WTC11 (cell line): ENCODE measurements at regions of chr17 and their contacts with region 1.

Region 1: GRCh38 chr17:74203439-74204240 is at the start of gene RPL38:
- DNase-seq: peak; percentile 98
- ATAC-seq: peak; percentile 80
- H3K4me3 Mint-ChIP-seq: peak within 1 kb of the TSS; percentile 100
- H3K27ac Mint-ChIP-seq: peak within 1 kb of the TSS; percentile 99
- H3K4me1 Mint-ChIP-seq: peaks cover 40% of the 10 kb centered on the region
- H3K27me3 Mint-ChIP-seq: peaks cover 24% of the 10 kb centered on the region
- CTCF ChIP-seq: peak; percentile 91
- total RNA-seq, gene RPL38: 1,170 to 1,273 TPM (median 1,266 TPM) in 3 replicates

Region 2: DNA sequence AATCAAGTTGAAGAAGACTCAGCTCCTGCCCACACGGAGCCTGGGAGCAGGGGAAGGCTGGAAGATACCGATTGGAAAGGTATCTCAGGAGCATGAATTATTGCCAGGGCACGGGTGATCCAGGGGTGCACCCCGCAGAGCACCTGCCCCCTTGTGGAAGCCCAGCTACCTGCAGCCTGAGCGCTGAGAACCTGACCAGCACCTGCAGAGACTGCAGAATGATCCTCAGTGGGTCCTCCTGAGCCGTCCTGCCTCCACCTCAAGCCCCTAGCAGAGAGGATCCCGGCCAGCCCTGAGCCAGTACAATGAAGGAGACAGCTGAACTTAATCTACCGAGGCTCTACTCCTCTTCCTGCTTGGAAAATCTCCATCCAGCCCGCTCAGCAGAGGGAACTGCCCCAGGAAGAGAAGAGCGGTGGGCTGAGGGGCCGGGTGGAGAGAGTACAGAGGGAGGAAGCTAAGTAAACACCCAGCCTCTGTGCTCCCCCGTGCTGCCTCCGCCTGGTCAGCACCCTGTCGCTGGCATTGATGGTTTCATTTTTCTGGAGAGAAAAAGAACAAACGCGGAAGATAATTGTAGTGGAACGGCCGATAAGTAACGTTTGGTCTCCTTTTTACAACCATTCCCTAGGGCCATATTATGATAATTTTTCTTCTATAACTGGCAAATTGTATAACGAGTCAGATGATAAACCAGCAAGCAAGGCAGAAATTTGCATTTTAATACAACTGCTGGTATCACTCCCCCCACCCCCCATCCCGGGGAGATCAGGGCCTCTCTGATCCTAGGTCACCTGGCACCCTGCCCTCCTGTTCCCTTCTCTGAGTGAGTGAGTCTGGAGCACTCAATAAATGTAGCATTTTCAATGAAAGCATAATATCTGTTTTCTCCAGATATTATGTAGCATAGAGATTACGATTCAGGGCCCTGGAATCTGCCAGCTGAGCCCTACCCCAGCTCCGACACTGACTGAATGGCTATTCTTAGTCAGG is 204.7 kb before region 1 on chr17:
- CTCF ChIA-PET with region 1: interaction called, 16 read pairs
- POLR2A ChIA-PET with region 1: no interaction called
- DNase-seq: peak; percentile 88
- ATAC-seq: peak; percentile 99
- H3K4me3 Mint-ChIP-seq: no peak overlapping the region
- H3K27ac Mint-ChIP-seq: no peak overlapping the region
- H3K4me1 Mint-ChIP-seq: peaks cover 11% of the 10 kb centered on the region
- H3K27me3 Mint-ChIP-seq: peaks cover 5% of the 10 kb centered on the region; the same call in 1 of the 2 replicates
- CTCF ChIP-seq: peak; percentile 92

Region 3: GRCh38 chr17:74089869-74090464 is 113.7 kb before region 1 on chr17:
- CTCF ChIA-PET with region 1: interaction called, 60 read pairs
- POLR2A ChIA-PET with region 1: no interaction called
- DNase-seq: peak; percentile 95
- ATAC-seq: peak; percentile 93
- H3K4me3 Mint-ChIP-seq: no peak overlapping the region
- H3K27ac Mint-ChIP-seq: no peak overlapping the region
- H3K4me1 Mint-ChIP-seq: no peaks in the 10 kb centered on the region
- H3K27me3 Mint-ChIP-seq: peaks cover 13% of the 10 kb centered on the region; the same call in 1 of the 2 replicates
- CTCF ChIP-seq: peak; percentile 76

Region 4: GRCh38 chr17:74152591-74153455 is 50.8 kb before region 1 on chr17:
- CTCF ChIA-PET with region 1: interaction called, 11 read pairs
- POLR2A ChIA-PET with region 1: no interaction called
- DNase-seq: no peak
- ATAC-seq: no peak
- H3K4me3 Mint-ChIP-seq: no peak overlapping the region
- H3K27ac Mint-ChIP-seq: no peak overlapping the region
- H3K4me1 Mint-ChIP-seq: peaks cover 17% of the 10 kb centered on the region
- H3K27me3 Mint-ChIP-seq: no peaks in the 10 kb centered on the region; the same call in 1 of the 2 replicates
- CTCF ChIP-seq: no peak

Region 5: DNA sequence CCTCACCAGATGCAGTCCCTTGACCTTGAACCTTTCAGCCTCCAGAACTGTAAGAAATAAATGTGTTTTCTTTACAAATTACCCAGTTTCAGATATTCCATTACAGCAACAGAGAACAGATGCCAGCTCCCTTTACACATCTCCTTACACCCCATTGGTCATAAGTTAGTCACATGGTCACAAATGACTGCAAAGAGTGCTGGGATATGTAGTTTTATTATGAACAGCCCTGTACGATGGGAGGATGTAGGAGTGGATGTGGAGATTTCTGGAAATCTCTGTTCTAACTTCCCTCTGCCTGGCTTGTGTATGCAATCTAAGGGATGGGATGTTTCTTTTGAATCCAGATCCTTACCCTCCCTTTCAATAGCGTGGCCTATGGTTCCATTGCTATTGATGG is 13.5 kb before region 1 on chr17:
- CTCF ChIA-PET with region 1: interaction called, 99 read pairs
- POLR2A ChIA-PET with region 1: no interaction called
- DNase-seq: no peak
- ATAC-seq: peak; percentile 85
- H3K4me3 Mint-ChIP-seq: no peak overlapping the region
- H3K27ac Mint-ChIP-seq: no peak overlapping the region
- H3K4me1 Mint-ChIP-seq: peaks cover 16% of the 10 kb centered on the region
- H3K27me3 Mint-ChIP-seq: no peaks in the 10 kb centered on the region; the same call in 1 of the 2 replicates
- CTCF ChIP-seq: no peak

Region 6: DNA sequence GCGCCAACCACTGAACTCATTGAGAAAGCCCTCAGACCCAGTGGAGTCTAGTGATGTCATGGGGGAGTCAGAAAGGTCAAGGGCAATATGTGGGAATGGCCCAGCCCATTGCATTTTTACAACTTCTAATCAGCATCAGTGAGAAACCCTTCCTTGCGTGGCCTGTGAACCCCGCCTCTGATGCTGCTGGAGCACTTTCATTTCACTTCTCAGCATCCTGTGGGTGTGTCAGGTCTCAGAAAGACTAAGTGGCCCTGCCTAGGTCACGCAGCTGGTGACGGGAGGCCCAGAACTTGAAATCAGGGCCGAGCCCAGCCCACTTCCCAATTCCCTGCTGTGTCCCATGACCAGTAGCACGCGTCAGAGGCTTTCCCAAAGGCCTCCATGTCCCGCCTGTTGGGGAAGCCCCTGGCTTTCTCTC is 76.5 kb after region 1 on chr17:
- CTCF ChIA-PET with region 1: interaction called, 10 read pairs
- POLR2A ChIA-PET with region 1: no interaction called
- DNase-seq: no peak
- ATAC-seq: no peak
- H3K4me3 Mint-ChIP-seq: no peak overlapping the region
- H3K27ac Mint-ChIP-seq: peak overlapping the region; percentile 27; the same call in 1 of the 2 replicates
- H3K4me1 Mint-ChIP-seq: peaks cover 4% of the 10 kb centered on the region; the same call in 1 of the 2 replicates
- H3K27me3 Mint-ChIP-seq: peaks cover 9% of the 10 kb centered on the region
- CTCF ChIP-seq: no peak

Region 7: DNA sequence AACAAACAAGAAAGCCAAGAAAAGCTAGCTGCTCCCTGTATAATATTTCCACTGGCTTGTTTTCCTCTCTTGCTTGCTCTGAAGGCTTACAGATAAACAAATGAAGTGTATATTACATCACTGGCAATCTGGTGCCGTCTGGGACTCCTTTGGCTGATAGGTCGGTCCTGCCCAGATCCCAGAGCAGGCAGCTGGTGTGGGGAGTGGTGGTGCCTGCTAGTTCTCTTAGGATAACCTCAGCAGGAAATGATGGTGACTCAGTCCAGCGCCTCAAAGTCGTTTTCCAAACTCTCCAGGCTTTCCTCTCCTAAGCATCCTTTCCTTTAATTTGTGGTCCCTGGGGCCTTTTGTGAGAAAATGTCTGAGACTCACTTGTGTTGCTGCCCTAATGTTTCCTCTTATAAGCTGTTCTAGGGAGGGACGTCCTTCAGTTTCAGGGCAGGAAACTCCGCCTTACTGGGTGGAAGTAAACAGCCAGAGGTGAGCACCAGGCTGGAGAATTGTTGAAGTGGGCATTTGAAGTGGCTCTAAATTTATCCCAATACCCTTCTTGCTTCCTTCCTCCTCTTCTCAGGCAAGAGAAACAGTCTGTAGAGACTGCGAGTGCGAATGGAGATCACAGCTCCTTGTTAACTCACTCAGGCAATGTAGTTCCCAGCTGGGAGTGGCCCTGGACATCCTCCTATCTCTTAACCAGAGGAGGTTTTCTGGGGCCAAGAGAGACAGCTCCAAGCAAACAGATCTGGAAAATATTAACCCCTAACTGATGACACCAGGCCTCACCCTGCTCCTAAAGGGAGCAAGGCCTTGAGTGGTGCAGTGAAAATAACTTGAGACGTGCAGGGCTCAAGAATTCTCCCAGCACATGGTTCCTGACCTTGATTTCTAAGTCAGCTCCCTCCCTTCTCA is 474.2 kb after region 1 on chr17:
- CTCF ChIA-PET with region 1: no interaction called
- POLR2A ChIA-PET with region 1: no interaction called
- DNase-seq: no peak
- ATAC-seq: peak; percentile 84
- H3K4me3 Mint-ChIP-seq: no peak overlapping the region
- H3K27ac Mint-ChIP-seq: no peak overlapping the region; the same call in 1 of the 2 replicates
- H3K4me1 Mint-ChIP-seq: peaks cover 17% of the 10 kb centered on the region
- H3K27me3 Mint-ChIP-seq: peaks cover 30% of the 10 kb centered on the region
- CTCF ChIP-seq: no peak